ENCODE measurements at regions of chr20 and their contacts with region 1.

Region 1: DNA sequence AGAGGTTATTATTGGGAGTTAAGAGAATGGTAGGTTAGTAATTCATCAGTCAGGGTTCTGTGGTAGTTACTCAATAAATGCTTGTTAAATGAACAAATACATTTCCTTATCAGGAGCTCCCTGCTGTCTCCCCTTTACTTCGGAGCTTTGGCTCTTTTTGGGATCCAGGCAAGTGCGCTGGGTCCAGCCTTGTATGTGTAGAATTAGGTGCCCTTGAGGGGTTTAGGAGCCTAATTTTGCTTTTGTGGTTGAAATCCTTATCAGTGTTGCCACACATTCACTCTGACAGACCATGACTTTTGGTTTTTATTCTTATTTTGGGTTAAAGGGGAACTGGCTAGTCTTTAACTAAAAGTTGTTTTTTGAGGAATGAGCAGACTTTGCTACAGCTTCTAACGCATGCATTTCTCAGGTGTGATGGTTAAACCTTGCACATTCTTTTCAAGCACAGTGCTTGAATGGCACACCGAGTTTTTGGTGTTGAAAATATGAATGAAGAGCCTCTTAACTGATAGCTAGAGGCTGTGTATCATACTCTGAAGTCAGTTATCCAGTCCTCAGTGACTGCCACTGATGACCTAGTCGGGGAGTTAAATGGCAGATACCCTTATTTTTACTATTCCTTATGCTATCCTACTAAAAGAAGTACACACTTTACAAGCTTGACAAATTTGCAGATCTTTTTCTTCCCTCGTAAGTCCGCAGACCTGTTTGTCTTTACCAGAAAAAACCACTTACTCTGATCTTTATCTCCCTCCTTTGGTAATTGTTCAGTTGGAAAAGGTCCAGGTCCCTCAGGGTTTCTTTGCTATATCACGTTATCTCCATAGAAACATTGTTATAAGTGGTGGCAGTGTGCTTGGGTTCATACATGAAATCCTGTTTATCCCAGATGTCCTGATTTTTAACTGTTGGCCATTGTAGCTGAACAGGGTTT is 50.7 kb upstream of the PLCG1 start:
- H3K4me3 Mint-ChIP-seq: no peak overlapping the region
- H3K27ac Mint-ChIP-seq: no peak overlapping the region
- H3K4me1 Mint-ChIP-seq: peaks cover 19% of the 10 kb centered on the region
- H3K27me3 Mint-ChIP-seq: no peaks in the 10 kb centered on the region

Region 2: DNA sequence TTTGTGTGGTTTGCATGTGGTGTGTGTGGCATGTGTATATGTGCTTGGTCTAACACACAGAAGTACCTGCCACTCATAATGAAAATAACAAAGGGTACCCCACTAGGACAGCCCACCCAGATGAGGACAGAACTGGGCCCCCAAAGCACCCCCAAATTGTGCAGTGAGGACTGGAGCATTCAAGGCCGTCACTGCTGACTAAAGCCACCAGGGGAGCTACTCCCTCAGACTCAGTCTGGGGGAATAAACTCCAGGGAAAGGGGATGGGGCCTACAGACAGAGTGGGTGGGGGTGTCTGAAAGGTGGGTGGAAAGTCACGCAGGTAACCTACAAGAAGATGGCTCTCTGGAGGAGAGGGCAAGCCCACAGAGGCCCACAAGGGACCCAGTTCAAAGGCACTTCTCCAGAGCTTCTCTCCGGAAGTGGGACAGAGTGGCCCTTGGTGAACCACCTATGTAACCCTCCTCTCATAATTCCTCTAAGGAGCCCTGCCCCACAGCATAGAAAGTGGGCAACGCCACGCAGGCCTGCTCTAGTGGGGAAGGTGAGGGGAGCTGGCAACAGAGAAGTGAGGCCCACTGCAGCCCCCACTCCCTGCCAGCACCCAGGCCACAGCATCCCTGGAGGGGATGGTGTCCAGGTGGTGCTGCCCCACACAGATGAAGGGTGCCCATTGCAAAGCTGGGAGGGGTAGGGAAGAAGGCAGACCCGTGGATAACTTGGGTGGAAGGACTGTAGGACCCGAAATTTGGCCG is 274.8 kb before region 1 on chr20:
- intact Hi-C with region 1: no loop called
- H3K4me3 Mint-ChIP-seq: no peak overlapping the region
- H3K27ac Mint-ChIP-seq: no peak overlapping the region
- H3K4me1 Mint-ChIP-seq: peaks cover 20% of the 10 kb centered on the region
- H3K27me3 Mint-ChIP-seq: peaks cover 2% of the 10 kb centered on the region

Region 3: GRCh38 chr20:41028348-41029148 is 58.1 kb before region 1 on chr20 and contains the start of gene TOP1:
- intact Hi-C with region 1: loop called (anchors 10 kb)
- H3K4me3 Mint-ChIP-seq: peak within 1 kb of the TSS; percentile 90
- H3K27ac Mint-ChIP-seq: peak within 1 kb of the TSS; percentile 100
- H3K4me1 Mint-ChIP-seq: peaks cover 49% of the 10 kb centered on the region
- H3K27me3 Mint-ChIP-seq: no peaks in the 10 kb centered on the region